HAP-1 (cell line): ENCODE measurements at regions of chr1 and their contacts with region 1.

Region 1: GRCh38 chr1:237386362-237387143 is 344.6 kb downstream of the RYR2 start:
- DNase-seq: peak in 1 of 2 experiments; percentile 51
- H3K4me3 ChIP-seq: no peak overlapping the region
- H3K4me1 ChIP-seq: no peaks in the 10 kb centered on the region
- H3K27me3 ChIP-seq: peaks cover 3% of the 10 kb centered on the region

Region 2: GRCh38 chr1:236639686-236640085 is 746.9 kb before region 1 on chr1:
- in situ Hi-C with region 1: loop called (anchors 25 kb)
- DNase-seq: no peak
- H3K4me3 ChIP-seq: no peak overlapping the region
- H3K4me1 ChIP-seq: no peaks in the 10 kb centered on the region
- H3K27me3 ChIP-seq: no peaks in the 10 kb centered on the region; the same call in 1 of the 2 replicates

Region 3: GRCh38 chr1:236759252-236759859 is 627.2 kb before region 1 on chr1:
- in situ Hi-C with region 1: loop called (anchors 25 kb)
- DNase-seq: peak; percentile 32 to 43
- H3K4me3 ChIP-seq: no peak overlapping the region
- H3K4me1 ChIP-seq: no peaks in the 10 kb centered on the region
- H3K27me3 ChIP-seq: no peaks in the 10 kb centered on the region

Region 4: GRCh38 chr1:237041795-237042525 is 344.6 kb before region 1 on chr1 and contains the start of gene RYR2:
- in situ Hi-C with region 1: loop called (anchors 25 kb)
- DNase-seq: peak; percentile 41 to 65
- H3K4me3 ChIP-seq: peak within 1 kb of the TSS; percentile 27
- H3K4me1 ChIP-seq: no peaks in the 10 kb centered on the region
- H3K27me3 ChIP-seq: peaks cover 54% of the 10 kb centered on the region

Region 5: GRCh38 chr1:237841485-237841884 is 454.9 kb after region 1 on chr1:
- in situ Hi-C with region 1: no loop called
- DNase-seq: no peak
- H3K4me3 ChIP-seq: no peak overlapping the region
- H3K4me1 ChIP-seq: no peaks in the 10 kb centered on the region
- H3K27me3 ChIP-seq: no peaks in the 10 kb centered on the region